HEK293T (cell line): ENCODE measurements at regions of chr2 and their contacts with region 1.

Region 1: GRCh38 chr2:55050133-55050994 is at the start of gene RTN4:
- DNase-seq: peak; percentile 93

Region 2: GRCh38 chr2:54687595-54688152 is 362.7 kb before region 1 on chr2:
- CTCF ChIA-PET with region 1: no interaction called
- POLR2A ChIA-PET with region 1: no interaction called
- DNase-seq: no peak

Region 3: GRCh38 chr2:54977149-54977548 is 73.2 kb before region 1 on chr2:
- CTCF ChIA-PET with region 1: no interaction called
- POLR2A ChIA-PET with region 1: no interaction called
- DNase-seq: no peak

Region 4: GRCh38 chr2:55111570-55112228 is 61.3 kb after region 1 on chr2:
- CTCF ChIA-PET with region 1: interaction called, 3 read pairs
- POLR2A ChIA-PET with region 1: interaction called, 40 read pairs
- DNase-seq: peak; percentile 63

Region 5: DNA sequence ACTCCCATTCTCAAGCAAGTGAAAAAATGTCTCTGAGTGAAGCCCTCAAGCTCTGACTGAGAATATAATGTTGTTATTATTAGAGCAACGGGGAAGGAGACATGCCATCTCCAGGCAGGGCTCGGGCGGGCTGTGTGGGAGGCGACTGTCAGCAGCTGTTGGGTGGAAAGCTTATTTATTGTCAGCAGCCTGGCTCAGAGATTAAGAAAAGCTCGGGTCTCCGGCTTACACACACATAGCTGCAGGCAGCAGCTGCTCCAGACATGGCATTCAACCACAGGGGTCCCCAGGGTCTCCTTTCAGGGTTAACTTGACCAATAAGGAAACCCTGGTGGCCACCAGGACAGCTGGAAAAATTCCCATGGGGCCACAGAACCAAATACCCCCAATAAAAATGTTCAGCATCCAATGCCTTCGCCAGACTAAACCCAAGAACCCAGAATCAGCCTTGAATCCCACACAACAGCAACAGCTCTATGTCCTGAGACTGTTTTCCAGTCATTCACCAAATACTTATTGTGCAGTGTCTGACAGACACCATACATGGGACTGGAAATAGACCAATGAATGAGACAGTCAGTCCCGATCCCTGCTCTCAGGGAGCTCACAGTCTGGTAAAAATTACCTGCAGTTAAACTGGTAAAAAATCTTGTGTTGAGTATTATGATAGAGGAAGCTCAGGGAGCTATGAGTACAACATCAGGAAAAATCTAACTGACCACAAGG is 70.4 kb after region 1 on chr2:
- CTCF ChIA-PET with region 1: interaction called, 3 read pairs
- POLR2A ChIA-PET with region 1: interaction called, 40 read pairs
- DNase-seq: peak; percentile 46

Region 6: GRCh38 chr2:55163274-55163721 is 112.9 kb after region 1 on chr2:
- CTCF ChIA-PET with region 1: interaction called, 16 read pairs
- POLR2A ChIA-PET with region 1: interaction called, 11 read pairs
- DNase-seq: no peak

Region 7: GRCh38 chr2:55168221-55169154 is 118.1 kb after region 1 on chr2:
- CTCF ChIA-PET with region 1: interaction called, 16 read pairs
- POLR2A ChIA-PET with region 1: interaction called, 11 read pairs
- DNase-seq: peak; percentile 54